ENCODE measurements at regions of chr13 and their contacts with region 1.

Region 1: DNA sequence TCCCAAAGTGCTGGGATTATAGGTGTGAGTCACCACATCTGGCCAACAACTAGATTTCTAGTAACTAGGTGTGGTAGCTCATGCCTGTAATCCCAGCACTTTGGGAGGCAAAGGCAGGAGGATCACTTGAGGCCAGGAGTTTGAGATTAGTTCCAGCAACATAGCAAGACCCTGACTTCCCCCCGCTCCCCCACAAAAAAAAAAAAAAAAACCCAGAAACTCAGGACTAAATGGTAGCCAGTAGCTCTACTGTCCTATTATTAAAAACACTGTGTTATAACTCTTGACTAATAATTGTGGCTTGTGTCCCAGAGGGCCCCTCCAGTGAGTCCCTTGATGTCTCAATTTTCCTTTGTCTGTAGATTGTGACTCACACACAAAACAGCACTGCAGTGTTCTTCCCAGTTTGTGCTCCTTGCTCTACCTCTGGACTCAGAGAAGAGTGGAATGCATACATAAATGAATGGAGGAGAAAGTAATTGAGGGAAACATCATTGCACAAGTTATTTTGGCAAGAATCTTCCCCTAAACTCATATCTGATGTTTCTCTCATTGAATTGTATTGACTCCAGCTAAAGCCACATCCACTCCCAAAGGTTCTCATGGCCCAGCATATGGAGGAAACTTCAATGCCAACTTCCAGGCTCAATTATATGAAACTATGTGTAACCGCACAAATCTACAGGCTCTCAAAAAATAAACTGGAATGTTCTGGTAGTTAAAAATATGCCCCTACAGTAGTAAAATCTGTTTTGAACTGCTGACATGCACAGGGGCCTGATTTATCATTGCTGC is 8.8 kb downstream of the TPT1 start:
- DNase-seq: no peak
- H3K4me3 Mint-ChIP-seq: no peak overlapping the region
- H3K27ac Mint-ChIP-seq: no peak overlapping the region
- H3K4me1 Mint-ChIP-seq: peaks cover 75% of the 10 kb centered on the region
- H3K27me3 Mint-ChIP-seq: no peaks in the 10 kb centered on the region

Region 2: DNA sequence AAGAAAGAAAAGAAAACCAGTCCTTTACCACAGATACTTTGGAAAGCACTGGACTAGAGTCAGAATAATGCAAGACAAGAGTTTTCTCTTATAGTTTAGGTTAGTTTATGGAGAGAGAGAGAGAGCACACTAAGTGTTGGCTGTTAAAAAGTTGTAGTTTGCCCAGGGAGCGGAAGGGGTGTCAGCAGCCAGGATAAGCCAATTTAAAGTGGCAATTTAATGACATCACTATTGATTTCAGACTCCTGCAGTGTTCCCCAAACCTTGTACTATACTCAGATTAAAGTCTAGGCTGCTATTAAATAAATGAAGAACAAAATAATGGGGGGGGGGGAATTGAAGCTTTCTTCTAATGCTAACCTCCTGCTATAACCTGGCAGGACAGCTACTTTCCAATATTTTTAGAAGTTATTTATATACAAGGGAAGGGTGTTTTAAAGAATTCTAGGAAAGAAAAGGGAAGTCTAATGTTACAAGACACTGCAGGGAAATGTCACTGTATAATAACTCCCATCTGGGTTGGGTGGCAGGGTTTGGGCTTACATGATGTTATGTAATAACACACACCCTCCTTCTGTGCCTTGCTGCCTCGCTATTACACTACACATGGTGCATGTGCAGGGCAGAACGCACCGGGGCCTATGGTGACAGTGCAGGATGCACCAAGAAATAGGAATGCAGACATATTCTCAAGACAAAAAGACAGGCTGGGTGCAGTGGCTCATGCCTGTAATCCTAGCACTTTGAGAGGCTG is 11.2 kb before region 1 on chr13:
- intact Hi-C with region 1: loop called (anchors 2 kb)
- DNase-seq: no peak
- H3K4me3 Mint-ChIP-seq: no peak overlapping the region
- H3K27ac Mint-ChIP-seq: no peak overlapping the region
- H3K4me1 Mint-ChIP-seq: peaks cover 5% of the 10 kb centered on the region
- H3K27me3 Mint-ChIP-seq: peaks cover 2% of the 10 kb centered on the region

Measured in activated CD4-positive, alpha-beta T cell treated with anti-CD3 and anti-CD28 coated beads, Interleukin-2, amount 10 ng/mL, durations not matched to agents 24 days and 14 days (primary cell).